ENCODE measurements at regions of chr2 and their contacts with region 1.

Region 1: GRCh38 chr2:201071479-201072200 is at the starts of genes HYCC2 and NDUFB3:
- DNase-seq: peak; percentile 79 to 98 (median 92)
- ATAC-seq: peak; percentile 93
- H3K4me3 ChIP-seq: peak within 1 kb of the TSS; percentile 61 to 70
- H3K4me3 Mint-ChIP-seq: peak within 1 kb of the TSS; percentile 95
- H3K27ac ChIP-seq: peak within 1 kb of the TSS; percentile 61 to 81
- H3K27ac Mint-ChIP-seq: peak within 1 kb of the TSS; percentile 97
- H3K4me1 ChIP-seq: peaks cover 42% of the 10 kb centered on the region
- H3K4me1 Mint-ChIP-seq: peaks cover 54% of the 10 kb centered on the region
- H3K27me3 ChIP-seq: no peaks in the 10 kb centered on the region
- H3K27me3 Mint-ChIP-seq: no peaks in the 10 kb centered on the region
- CTCF ChIP-seq: peak; percentile 38
- total RNA-seq, gene HYCC2: 35.7 to 36.8 TPM
- total RNA-seq, gene NDUFB3: 11.6 to 13.1 TPM

Region 2: GRCh38 chr2:199911052-199911876 is 1160.4 kb before region 1 on chr2 and contains the start of gene C2orf69:
- CTCF ChIA-PET with region 1: no interaction called
- POLR2A ChIA-PET with region 1: no interaction called
- intact Hi-C with region 1: loop called in 1 of 2 experiments (anchors 5 kb)
- DNase-seq: peak; percentile 80 to 96 (median 91)
- ATAC-seq: peak; percentile 78
- H3K4me3 ChIP-seq: peak within 1 kb of the TSS; percentile 82 to 83
- H3K4me3 Mint-ChIP-seq: peak within 1 kb of the TSS; percentile 99
- H3K27ac ChIP-seq: peak within 1 kb of the TSS; percentile 84 to 93
- H3K27ac Mint-ChIP-seq: peak within 1 kb of the TSS; percentile 95
- H3K4me1 ChIP-seq: peaks cover 28% of the 10 kb centered on the region
- H3K4me1 Mint-ChIP-seq: peaks cover 38% of the 10 kb centered on the region
- H3K27me3 ChIP-seq: no peaks in the 10 kb centered on the region
- H3K27me3 Mint-ChIP-seq: peaks cover 6% of the 10 kb centered on the region
- CTCF ChIP-seq: no peak
- total RNA-seq, gene C2orf69: 16.3 to 17.5 TPM

Region 3: DNA sequence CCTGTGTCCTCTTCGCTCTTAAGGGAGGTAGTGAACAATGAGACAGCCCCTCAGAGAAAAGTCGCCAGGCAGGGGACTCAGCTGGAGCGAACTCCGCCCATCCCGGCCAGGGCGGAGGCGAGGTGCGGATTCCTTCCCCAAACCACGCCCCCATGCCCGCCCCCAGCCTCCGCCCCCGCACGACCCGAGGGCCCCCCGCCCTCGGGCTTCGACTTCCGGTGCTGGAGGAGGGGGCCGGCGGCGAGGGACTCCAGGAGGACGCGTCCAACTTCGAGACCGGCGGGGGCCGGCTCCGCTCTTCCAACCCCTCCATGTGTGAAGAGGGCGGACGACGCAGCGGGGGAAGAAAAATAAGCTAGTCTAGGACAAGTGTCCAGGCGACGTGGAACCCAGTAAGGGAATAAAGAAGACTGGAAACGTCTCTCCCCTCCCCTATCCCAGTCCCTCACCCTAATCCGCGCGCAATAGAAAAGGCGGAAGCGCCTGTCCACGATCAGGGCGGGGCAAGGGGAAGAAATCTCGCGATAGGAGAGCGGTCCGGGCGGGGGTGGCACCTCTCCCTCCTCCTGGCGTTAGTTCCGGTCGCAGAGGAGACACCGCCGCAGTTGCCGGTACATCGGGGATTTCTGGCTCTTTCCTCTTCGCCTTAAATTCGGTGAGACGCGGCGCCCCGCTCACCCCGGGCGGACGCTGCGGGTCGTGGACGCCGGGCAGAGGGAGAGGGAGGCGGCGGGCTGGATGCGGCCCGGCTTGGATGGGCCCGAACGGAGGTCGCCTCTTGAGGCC is 260.1 kb before region 1 on chr2 and contains the start of gene BZW1:
- CTCF ChIA-PET with region 1: no interaction called
- POLR2A ChIA-PET with region 1: interaction called, 3 read pairs
- intact Hi-C with region 1: loop called (anchors 1 to 5 kb)
- DNase-seq: peak; percentile 94 to 98 (median 97)
- ATAC-seq: peak; percentile 82
- H3K4me3 ChIP-seq: peak within 1 kb of the TSS; percentile 69 to 90
- H3K4me3 Mint-ChIP-seq: peak within 1 kb of the TSS; percentile 99
- H3K27ac ChIP-seq: peak within 1 kb of the TSS; percentile 98
- H3K27ac Mint-ChIP-seq: peak within 1 kb of the TSS; percentile 98
- H3K4me1 ChIP-seq: peaks cover 33% of the 10 kb centered on the region
- H3K4me1 Mint-ChIP-seq: peaks cover 48% of the 10 kb centered on the region
- H3K27me3 ChIP-seq: no peaks in the 10 kb centered on the region
- H3K27me3 Mint-ChIP-seq: no peaks in the 10 kb centered on the region
- CTCF ChIP-seq: no peak
- total RNA-seq, gene BZW1: 330 to 338 TPM

Region 4: GRCh38 chr2:200901459-200902072 is 170.1 kb before region 1 on chr2:
- CTCF ChIA-PET with region 1: interaction called, 28 read pairs
- POLR2A ChIA-PET with region 1: interaction called, 3 read pairs
- intact Hi-C with region 1: loop called (anchors 1 kb)
- DNase-seq: peak; percentile 36 to 92 (median 73)
- ATAC-seq: peak; percentile 100
- H3K4me3 ChIP-seq: no peak overlapping the region
- H3K4me3 Mint-ChIP-seq: no peak overlapping the region
- H3K27ac ChIP-seq: peak overlapping the region in 1 of 2 experiments; percentile 4
- H3K27ac Mint-ChIP-seq: peak overlapping the region; percentile 45
- H3K4me1 ChIP-seq: peaks cover 4% of the 10 kb centered on the region
- H3K4me1 Mint-ChIP-seq: peaks cover 7% of the 10 kb centered on the region
- H3K27me3 ChIP-seq: no peaks in the 10 kb centered on the region
- H3K27me3 Mint-ChIP-seq: no peaks in the 10 kb centered on the region
- CTCF ChIP-seq: peak; percentile 84

Region 5: DNA sequence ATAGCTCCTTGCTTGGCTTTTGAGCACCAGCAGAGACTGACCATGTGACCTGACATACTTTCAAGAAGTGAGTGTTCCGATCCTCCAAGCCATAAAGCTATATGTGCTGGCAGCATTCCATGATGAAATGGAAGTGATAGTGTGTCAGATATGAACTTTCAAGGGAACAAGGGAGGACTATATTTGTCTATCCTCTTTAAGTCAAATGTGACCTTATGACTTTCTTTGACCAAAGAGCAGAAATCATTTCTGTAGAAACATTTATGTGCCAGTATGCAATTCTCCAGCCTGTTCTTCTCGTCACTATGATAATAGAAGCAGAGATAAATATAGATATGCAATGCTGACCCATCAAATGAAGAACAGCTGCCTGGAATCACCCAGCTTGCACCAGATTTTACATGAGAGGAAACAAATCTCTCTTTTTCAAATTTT is 14.5 kb before region 1 on chr2:
- CTCF ChIA-PET with region 1: interaction called, 12 read pairs
- POLR2A ChIA-PET with region 1: interaction called, 3 read pairs
- intact Hi-C with region 1: no loop called
- DNase-seq: no peak
- ATAC-seq: no peak
- H3K4me3 ChIP-seq: no peak overlapping the region
- H3K4me3 Mint-ChIP-seq: no peak overlapping the region
- H3K27ac ChIP-seq: no peak overlapping the region
- H3K27ac Mint-ChIP-seq: peak overlapping the region; percentile 19
- H3K4me1 ChIP-seq: no peaks in the 10 kb centered on the region
- H3K4me1 Mint-ChIP-seq: peaks cover 44% of the 10 kb centered on the region
- H3K27me3 ChIP-seq: no peaks in the 10 kb centered on the region
- H3K27me3 Mint-ChIP-seq: no peaks in the 10 kb centered on the region
- CTCF ChIP-seq: no peak

Region 6: DNA sequence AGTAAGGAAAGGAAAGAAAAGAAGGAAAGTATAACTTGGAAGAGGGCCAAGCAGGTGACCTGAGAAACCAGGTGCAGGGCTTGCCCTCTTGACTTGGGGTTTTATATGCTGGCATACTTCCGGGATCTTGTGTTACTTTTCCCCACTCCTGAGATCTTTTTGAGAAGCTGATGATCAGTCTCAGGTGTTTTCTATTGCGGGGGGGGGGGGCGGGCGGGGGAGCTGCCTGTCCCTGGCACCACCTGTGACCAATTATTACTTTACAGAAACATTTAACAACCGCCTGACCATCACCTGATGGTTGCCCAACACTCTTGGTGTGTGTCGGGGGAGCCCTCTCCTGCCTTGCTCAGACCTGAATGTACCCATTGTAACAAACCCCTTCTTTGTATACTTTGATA is 104.4 kb after region 1 on chr2:
- CTCF ChIA-PET with region 1: interaction called, 4 read pairs
- POLR2A ChIA-PET with region 1: no interaction called
- intact Hi-C with region 1: loop called in 1 of 2 experiments (anchors 5 kb)
- DNase-seq: no peak
- ATAC-seq: no peak
- H3K4me3 ChIP-seq: no peak overlapping the region
- H3K4me3 Mint-ChIP-seq: no peak overlapping the region
- H3K27ac ChIP-seq: no peak overlapping the region
- H3K27ac Mint-ChIP-seq: no peak overlapping the region
- H3K4me1 ChIP-seq: no peaks in the 10 kb centered on the region
- H3K4me1 Mint-ChIP-seq: peaks cover 12% of the 10 kb centered on the region
- H3K27me3 ChIP-seq: no peaks in the 10 kb centered on the region
- H3K27me3 Mint-ChIP-seq: no peaks in the 10 kb centered on the region
- CTCF ChIP-seq: no peak

Measured in CD8-positive, alpha-beta T cell (primary cell).